CD4-positive, alpha-beta memory T cell (primary cell): ENCODE measurements at regions of chrX and their contacts with region 1.

Region 1: DNA sequence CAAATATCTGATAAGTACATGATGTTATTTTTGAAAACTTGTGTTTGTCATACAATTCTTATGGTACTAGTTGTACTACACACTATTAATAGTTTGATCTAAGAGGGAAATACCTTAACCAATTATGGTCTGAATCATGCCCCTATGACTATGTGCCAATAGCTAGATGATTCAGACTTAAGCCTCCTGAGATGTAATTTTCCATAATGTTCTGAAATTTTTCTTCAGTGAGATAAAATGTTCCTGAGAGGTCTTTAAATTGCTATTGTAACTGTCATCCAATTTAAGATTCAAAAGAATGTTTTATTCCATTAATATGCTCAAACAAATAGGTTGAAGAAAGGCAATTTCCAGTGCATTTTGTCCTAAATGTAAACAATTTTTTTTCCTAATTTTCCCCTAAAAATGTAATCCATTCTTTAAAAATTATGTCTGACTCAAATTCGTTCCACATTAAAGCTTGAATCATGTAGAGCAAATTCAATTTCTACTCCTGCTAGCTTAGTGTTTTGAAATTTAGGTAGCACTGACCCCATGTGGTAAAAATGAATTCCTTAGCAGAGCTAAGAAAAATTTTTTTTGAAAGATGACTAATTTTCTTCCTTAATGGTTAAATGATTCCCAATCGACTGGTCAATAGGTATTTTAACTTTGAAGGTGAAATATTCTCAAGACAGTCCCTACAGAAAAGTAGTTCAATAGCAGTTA is 49.1 kb downstream of the APOOL start:
- DNase-seq: no peak
- H3K4me3 ChIP-seq: no peak overlapping the region
- H3K4me3 Mint-ChIP-seq: no peak overlapping the region
- H3K27ac ChIP-seq: no peak overlapping the region
- H3K27ac Mint-ChIP-seq: no peak overlapping the region
- H3K4me1 ChIP-seq: no peaks in the 10 kb centered on the region
- H3K4me1 Mint-ChIP-seq: no peaks in the 10 kb centered on the region
- H3K27me3 ChIP-seq: no peaks in the 10 kb centered on the region
- H3K27me3 Mint-ChIP-seq: no peaks in the 10 kb centered on the region

Region 2: DNA sequence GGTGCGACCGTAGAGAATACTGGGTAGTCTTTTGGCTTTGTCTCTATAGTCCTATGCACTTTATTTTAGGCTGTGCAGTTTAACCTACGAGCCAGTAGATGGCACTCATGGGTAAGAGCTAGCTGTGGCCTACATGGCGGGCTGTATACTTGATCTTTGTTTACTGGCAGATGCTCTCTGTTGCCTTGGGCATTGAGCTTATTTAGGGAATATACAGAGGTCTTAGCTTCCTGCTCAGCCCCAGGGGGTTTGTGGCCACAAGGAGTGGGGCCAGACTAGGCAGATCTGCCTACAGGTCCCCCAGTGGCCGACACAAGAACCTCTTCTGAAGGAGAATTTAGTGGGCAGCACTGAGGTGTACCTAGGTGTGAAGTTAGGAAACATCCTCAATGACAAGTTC is 323.0 kb before region 1 on chrX:
- CTCF ChIA-PET with region 1: interaction called, 3 read pairs
- POLR2A ChIA-PET with region 1: no interaction called
- intact Hi-C with region 1: loop called (anchors 5 kb)
- DNase-seq: peak in 4 of 5 donors; percentile 7 to 22 (median 12)
- H3K4me3 ChIP-seq: no peak overlapping the region
- H3K4me3 Mint-ChIP-seq: peak overlapping the region in 1 of 8 donors; percentile 47
- H3K27ac ChIP-seq: no peak overlapping the region
- H3K27ac Mint-ChIP-seq: no peak overlapping the region
- H3K4me1 ChIP-seq: no peaks in the 10 kb centered on the region
- H3K4me1 Mint-ChIP-seq: no peaks in the 10 kb centered on the region
- H3K27me3 ChIP-seq: no peaks in the 10 kb centered on the region
- H3K27me3 Mint-ChIP-seq: no peaks in the 10 kb centered on the region

Region 3: DNA sequence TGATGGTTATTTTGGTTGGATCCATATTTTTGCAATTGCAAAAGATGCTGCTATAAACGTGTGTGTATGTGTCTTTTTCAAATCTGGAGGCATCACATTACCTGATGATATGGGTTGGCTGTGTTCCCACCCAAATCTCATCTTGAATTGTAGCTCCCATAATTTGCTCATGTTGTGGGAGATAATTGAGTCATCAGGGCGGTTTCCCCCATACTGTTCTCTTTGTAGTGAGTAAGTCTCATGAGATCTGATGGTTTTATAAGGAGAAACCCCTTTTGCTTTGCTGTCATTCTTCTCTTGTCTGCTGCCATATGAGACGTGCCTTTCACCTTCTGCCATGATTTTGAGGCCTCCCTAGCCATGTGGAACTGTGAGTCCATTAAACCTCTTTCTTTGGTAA is 15.7 kb before region 1 on chrX:
- CTCF ChIA-PET with region 1: no interaction called
- POLR2A ChIA-PET with region 1: no interaction called
- intact Hi-C with region 1: no loop called
- DNase-seq: no peak
- H3K4me3 ChIP-seq: no peak overlapping the region
- H3K4me3 Mint-ChIP-seq: no peak overlapping the region
- H3K27ac ChIP-seq: no peak overlapping the region
- H3K27ac Mint-ChIP-seq: no peak overlapping the region
- H3K4me1 ChIP-seq: no peaks in the 10 kb centered on the region
- H3K4me1 Mint-ChIP-seq: peaks cover 0 to 16% (median under 1%) of the 10 kb centered on the region in 4 donors
- H3K27me3 ChIP-seq: no peaks in the 10 kb centered on the region
- H3K27me3 Mint-ChIP-seq: no peaks in the 10 kb centered on the region